ENCODE measurements at regions of chr1 and their contacts with region 1.

Region 1: GRCh38 chr1:225418598-225418997 is 9.2 kb downstream of the LBR start:
- DNase-seq: peak; percentile 86 to 90
- H3K4me3 ChIP-seq: no peak overlapping the region
- H3K4me3 Mint-ChIP-seq: peak overlapping the region; percentile 24
- H3K27ac Mint-ChIP-seq: peak overlapping the region; percentile 7
- H3K4me1 ChIP-seq: peaks cover 24% of the 10 kb centered on the region
- H3K4me1 Mint-ChIP-seq: peaks cover 31% of the 10 kb centered on the region
- H3K27me3 ChIP-seq: no peaks in the 10 kb centered on the region
- H3K27me3 Mint-ChIP-seq: no peaks in the 10 kb centered on the region
- CTCF ChIP-seq: peak in 1 of 2 experiments; percentile 45

Region 2: GRCh38 chr1:225228841-225229303 is 189.7 kb before region 1 on chr1:
- CTCF ChIA-PET with region 1: no interaction called
- POLR2A ChIA-PET with region 1: no interaction called
- intact Hi-C with region 1: loop called (anchors 5 kb)
- DNase-seq: peak; percentile 81 to 87
- H3K4me3 ChIP-seq: no peak overlapping the region
- H3K4me3 Mint-ChIP-seq: peak overlapping the region; percentile 33
- H3K27ac Mint-ChIP-seq: peak overlapping the region; percentile 39
- H3K4me1 ChIP-seq: peaks cover 44% of the 10 kb centered on the region
- H3K4me1 Mint-ChIP-seq: peaks cover 42% of the 10 kb centered on the region
- H3K27me3 ChIP-seq: no peaks in the 10 kb centered on the region
- H3K27me3 Mint-ChIP-seq: no peaks in the 10 kb centered on the region
- CTCF ChIP-seq: no peak

Region 3: GRCh38 chr1:225318706-225319575 is 99.7 kb before region 1 on chr1:
- CTCF ChIA-PET with region 1: interaction called, 20 read pairs
- POLR2A ChIA-PET with region 1: interaction called, 4 read pairs
- intact Hi-C with region 1: loop called (anchors 1 kb)
- DNase-seq: peak; percentile 58 to 71
- H3K4me3 ChIP-seq: no peak overlapping the region
- H3K4me3 Mint-ChIP-seq: no peak overlapping the region
- H3K27ac Mint-ChIP-seq: no peak overlapping the region
- H3K4me1 ChIP-seq: 0 out of 2 replicates have a peak, but pooled peaks cover 6% of the 10 kb centered on the region
- H3K4me1 Mint-ChIP-seq: peaks cover 10% of the 10 kb centered on the region
- H3K27me3 ChIP-seq: no peaks in the 10 kb centered on the region
- H3K27me3 Mint-ChIP-seq: no peaks in the 10 kb centered on the region
- CTCF ChIP-seq: peak; percentile 77 to 80

Region 4: GRCh38 chr1:225441314-225442122 is 22.9 kb after region 1 on chr1:
- CTCF ChIA-PET with region 1: interaction called, 14 read pairs
- POLR2A ChIA-PET with region 1: no interaction called
- intact Hi-C with region 1: no loop called
- DNase-seq: peak; percentile 57 to 65
- H3K4me3 ChIP-seq: no peak overlapping the region
- H3K4me3 Mint-ChIP-seq: no peak overlapping the region
- H3K27ac Mint-ChIP-seq: peak overlapping the region; percentile 77
- H3K4me1 ChIP-seq: peaks cover 37% of the 10 kb centered on the region
- H3K4me1 Mint-ChIP-seq: peaks cover 29% of the 10 kb centered on the region
- H3K27me3 ChIP-seq: no peaks in the 10 kb centered on the region
- H3K27me3 Mint-ChIP-seq: no peaks in the 10 kb centered on the region
- CTCF ChIP-seq: peak; percentile 10 to 57